Calu3 (cell line): ENCODE measurements at regions of chr2 and their contacts with region 1.

Region 1: GRCh38 chr2:214255046-214255445 is 155.8 kb upstream of the VWC2L start:
- DNase-seq: no peak
- H3K4me3 Mint-ChIP-seq: no peak overlapping the region
- H3K27ac Mint-ChIP-seq: no peak overlapping the region
- H3K4me1 Mint-ChIP-seq: no peaks in the 10 kb centered on the region
- H3K27me3 Mint-ChIP-seq: no peaks in the 10 kb centered on the region
- CTCF ChIP-seq: no peak

Region 2: GRCh38 chr2:213353419-213353818 is 901.6 kb before region 1 on chr2:
- CTCF ChIA-PET with region 1: interaction called, 11 read pairs
- intact Hi-C with region 1: no loop called
- DNase-seq: no peak
- H3K4me3 Mint-ChIP-seq: no peak overlapping the region
- H3K27ac Mint-ChIP-seq: no peak overlapping the region
- H3K4me1 Mint-ChIP-seq: no peaks in the 10 kb centered on the region
- H3K27me3 Mint-ChIP-seq: no peaks in the 10 kb centered on the region
- CTCF ChIP-seq: no peak